AG04450 (cell line): ENCODE measurements at regions of chr1 and their contacts with region 1.

Region 1: GRCh38 chr1:236489710-236490377 is 33.9 kb upstream of the LGALS8 start:
- DNase-seq: no peak
- H3K4me3 ChIP-seq: no peak overlapping the region
- H3K27ac ChIP-seq: no peak overlapping the region
- H3K27me3 ChIP-seq: no peaks in the 10 kb centered on the region
- CTCF ChIP-seq: peak; percentile 52

Region 2: GRCh38 chr1:236103646-236104218 is 386.1 kb before region 1 on chr1:
- CTCF ChIA-PET with region 1: interaction called, 12 read pairs
- POLR2A ChIA-PET with region 1: no interaction called
- DNase-seq: no peak
- H3K4me3 ChIP-seq: no peak overlapping the region
- H3K27ac ChIP-seq: no peak overlapping the region
- H3K27me3 ChIP-seq: peaks cover 2% of the 10 kb centered on the region
- CTCF ChIP-seq: peak; percentile 84

Region 3: DNA sequence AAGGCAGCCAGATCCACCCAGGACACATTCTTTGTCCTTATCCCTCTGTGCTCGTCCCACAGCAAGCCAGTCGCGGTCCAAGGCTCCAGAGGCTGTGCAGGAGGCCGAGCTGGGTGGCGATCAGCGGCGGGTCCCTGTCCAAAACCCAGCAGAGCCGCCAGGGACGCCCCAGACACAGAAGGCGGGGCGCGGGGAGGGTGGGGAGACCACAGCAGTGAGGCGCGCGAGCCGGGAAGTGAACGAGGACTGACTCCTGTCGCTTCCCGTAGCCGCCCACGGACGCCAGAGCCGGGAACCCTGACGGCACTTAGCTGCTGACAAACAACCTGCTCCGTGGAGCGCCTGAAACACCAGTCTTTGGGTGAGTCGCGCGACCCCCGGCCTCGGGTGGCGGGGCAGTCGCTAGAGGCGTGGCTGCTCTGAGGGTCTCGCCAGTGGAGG is 33.9 kb after region 1 on chr1 and contains the start of gene LGALS8:
- CTCF ChIA-PET with region 1: interaction called, 12 read pairs
- POLR2A ChIA-PET with region 1: no interaction called
- DNase-seq: peak; percentile 53
- H3K4me3 ChIP-seq: peak within 1 kb of the TSS; percentile 99
- H3K27ac ChIP-seq: peak within 1 kb of the TSS; percentile 69
- H3K27me3 ChIP-seq: no peaks in the 10 kb centered on the region
- CTCF ChIP-seq: no peak
- polyA plus RNA-seq, gene LGALS8: 64.8 and 82.4 TPM in 2 replicates